ENCODE measurements at regions of chr10 and their contacts with region 1.

Region 1: DNA sequence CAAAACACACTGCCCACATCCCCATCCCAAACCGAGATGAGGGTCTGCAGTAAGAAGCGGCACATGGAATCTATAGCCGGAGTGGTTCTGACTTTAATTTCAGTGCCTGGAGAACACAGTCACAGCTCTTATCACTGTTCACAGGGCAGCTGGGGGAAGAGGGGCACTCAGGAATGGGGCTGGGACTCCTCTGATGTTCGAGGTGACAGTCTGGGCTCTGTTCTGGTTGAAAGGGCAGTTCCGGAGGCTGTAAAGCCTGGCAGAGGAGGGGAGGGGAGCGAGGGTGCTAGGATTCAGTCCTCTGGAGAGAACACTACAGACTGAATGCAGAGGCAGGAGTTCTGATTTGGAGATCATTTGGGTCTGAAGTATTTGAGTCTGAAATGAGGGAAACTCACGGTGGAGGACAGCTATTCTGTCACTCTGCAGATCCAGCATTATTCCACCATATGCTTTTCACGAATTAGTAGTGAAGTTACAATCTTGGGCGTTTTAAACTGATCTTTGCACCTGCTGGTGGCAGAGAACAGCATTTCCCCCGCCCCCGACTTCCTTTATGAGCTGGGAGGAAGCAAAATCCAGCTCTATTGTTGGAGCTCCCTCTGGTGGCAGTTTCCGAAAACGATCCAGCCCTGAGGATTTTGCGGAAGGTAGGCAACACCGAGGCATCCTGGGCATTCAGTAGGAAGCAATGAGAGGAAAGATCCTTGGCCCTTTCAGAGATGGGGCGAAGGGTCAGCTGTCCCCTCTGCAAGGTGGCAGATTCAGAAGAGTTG is 22.7 kb upstream of the KCNK18 start:
- DNase-seq: peak; percentile 59 to 82 (median 68)
- H3K4me3 ChIP-seq: peak overlapping the region; percentile 59
- H3K4me3 Mint-ChIP-seq: peak overlapping the region; percentile 83 to 94 (median 91)
- H3K27ac ChIP-seq: no peak overlapping the region
- H3K27ac Mint-ChIP-seq: peak overlapping the region in 6 of 8 donors; percentile 5 to 85 (median 72)
- H3K4me1 ChIP-seq: peaks cover 14% of the 10 kb centered on the region
- H3K4me1 Mint-ChIP-seq: peaks cover 12 to 19% (median 18%) of the 10 kb centered on the region in 3 donors
- H3K27me3 ChIP-seq: peaks cover 16% of the 10 kb centered on the region
- H3K27me3 Mint-ChIP-seq: peaks cover 14 to 41% of the 10 kb centered on the region in 2 donors

Region 2: DNA sequence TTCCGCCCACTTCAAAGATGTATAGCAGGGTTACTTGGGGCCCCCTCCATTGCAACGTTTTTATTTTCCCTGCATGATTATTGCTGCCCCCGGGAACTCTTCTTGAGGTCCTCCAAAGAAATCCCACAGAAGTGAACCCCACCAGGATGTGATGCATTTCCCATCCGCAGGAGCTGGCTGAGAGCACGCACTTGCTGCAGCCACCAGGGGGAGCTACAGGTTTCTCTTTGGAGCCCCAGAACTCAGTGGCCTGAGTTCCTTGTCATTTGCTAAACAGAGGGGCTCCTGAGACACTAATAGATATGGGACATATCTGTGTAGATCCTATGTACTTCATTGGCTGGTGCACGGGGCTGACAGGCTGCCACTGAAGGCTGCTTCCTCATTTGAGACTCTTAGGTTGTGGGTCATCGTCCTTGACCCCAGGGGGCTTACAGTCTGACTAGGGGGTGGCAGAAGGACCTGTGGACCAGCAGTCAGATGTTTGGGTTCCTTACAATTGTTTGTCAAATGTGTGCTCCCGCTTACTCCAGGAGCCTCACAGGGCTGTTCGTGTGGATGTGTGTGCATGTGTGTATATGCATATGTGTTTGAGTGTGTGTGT is 377.6 kb before region 1 on chr10:
- CTCF ChIA-PET with region 1: interaction called, 26 read pairs
- POLR2A ChIA-PET with region 1: no interaction called
- DNase-seq: peak; percentile 37 to 62 (median 39)
- H3K4me3 ChIP-seq: no peak overlapping the region
- H3K4me3 Mint-ChIP-seq: no peak overlapping the region
- H3K27ac ChIP-seq: no peak overlapping the region
- H3K27ac Mint-ChIP-seq: peak overlapping the region in 2 of 8 donors; percentile 39 to 50
- H3K4me1 ChIP-seq: no peaks in the 10 kb centered on the region
- H3K4me1 Mint-ChIP-seq: peaks cover 0 to 2% (median 0%) of the 10 kb centered on the region in 3 donors
- H3K27me3 ChIP-seq: no peaks in the 10 kb centered on the region
- H3K27me3 Mint-ChIP-seq: peaks cover 13 to 27% of the 10 kb centered on the region in 2 donors

Region 3: DNA sequence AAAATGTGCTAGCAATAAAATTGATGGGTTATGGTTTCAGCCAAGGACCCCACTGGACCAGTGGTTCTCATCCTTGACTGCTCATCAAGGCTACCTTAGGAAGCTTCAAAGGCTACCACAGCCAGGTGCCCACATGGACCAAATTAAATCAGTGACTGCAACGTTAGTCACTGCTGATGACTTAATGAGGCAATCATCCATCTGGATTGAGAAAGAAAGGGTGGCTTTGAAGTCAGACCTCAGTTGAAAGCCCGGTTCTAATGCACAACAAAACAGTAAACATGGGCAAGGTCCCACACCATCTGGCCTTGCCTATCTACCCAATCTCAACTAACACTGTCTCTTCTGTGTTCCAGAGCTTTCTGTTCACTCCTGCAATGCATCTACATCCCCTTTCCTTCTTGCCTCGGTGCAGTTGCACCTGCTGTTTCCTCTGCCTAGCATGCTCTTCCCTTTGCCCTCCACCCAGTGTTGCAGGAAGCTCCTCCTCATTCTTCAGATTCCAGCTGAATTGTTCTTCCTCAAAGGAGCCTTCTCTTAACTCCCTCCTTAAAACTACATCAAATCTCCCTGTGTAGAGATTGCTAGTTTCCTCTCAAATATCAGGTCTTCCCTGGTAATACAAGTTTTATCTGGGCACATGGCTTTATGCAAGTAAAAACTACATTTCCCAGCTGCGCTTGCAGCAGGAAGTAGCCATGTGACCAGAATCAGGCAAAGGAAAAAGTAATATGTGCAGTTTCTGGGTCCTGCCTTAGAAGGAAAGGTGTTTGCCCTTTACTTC is 12.4 kb after region 1 on chr10:
- CTCF ChIA-PET with region 1: interaction called, 11 read pairs
- POLR2A ChIA-PET with region 1: no interaction called
- DNase-seq: no peak
- H3K4me3 ChIP-seq: no peak overlapping the region
- H3K4me3 Mint-ChIP-seq: no peak overlapping the region
- H3K27ac ChIP-seq: no peak overlapping the region
- H3K27ac Mint-ChIP-seq: no peak overlapping the region
- H3K4me1 ChIP-seq: no peaks in the 10 kb centered on the region
- H3K4me1 Mint-ChIP-seq: no peaks in the 10 kb centered on the region
- H3K27me3 ChIP-seq: peaks cover 4% of the 10 kb centered on the region
- H3K27me3 Mint-ChIP-seq: peaks cover 12 to 13% of the 10 kb centered on the region in 2 donors

Region 4: GRCh38 chr10:117541909-117542705 is 367.5 kb after region 1 on chr10:
- CTCF ChIA-PET with region 1: no interaction called
- POLR2A ChIA-PET with region 1: no interaction called
- DNase-seq: no peak
- H3K4me3 ChIP-seq: no peak overlapping the region
- H3K4me3 Mint-ChIP-seq: peak overlapping the region in 5 of 7 donors; percentile 19 to 51 (median 23)
- H3K27ac ChIP-seq: no peak overlapping the region
- H3K27ac Mint-ChIP-seq: no peak overlapping the region
- H3K4me1 ChIP-seq: peaks cover 4% of the 10 kb centered on the region
- H3K4me1 Mint-ChIP-seq: peaks cover 7 to 29% (median 21%) of the 10 kb centered on the region in 3 donors
- H3K27me3 ChIP-seq: peaks cover 36% of the 10 kb centered on the region
- H3K27me3 Mint-ChIP-seq: peaks cover 66 to 68% of the 10 kb centered on the region in 2 donors

Region 5: GRCh38 chr10:117723343-117723742 is 548.7 kb after region 1 on chr10:
- CTCF ChIA-PET with region 1: no interaction called
- POLR2A ChIA-PET with region 1: no interaction called
- DNase-seq: no peak
- H3K4me3 ChIP-seq: no peak overlapping the region
- H3K4me3 Mint-ChIP-seq: no peak overlapping the region
- H3K27ac ChIP-seq: no peak overlapping the region
- H3K27ac Mint-ChIP-seq: no peak overlapping the region
- H3K4me1 ChIP-seq: no peaks in the 10 kb centered on the region
- H3K4me1 Mint-ChIP-seq: no peaks in the 10 kb centered on the region
- H3K27me3 ChIP-seq: no peaks in the 10 kb centered on the region
- H3K27me3 Mint-ChIP-seq: peaks cover 3 to 19% of the 10 kb centered on the region in 2 donors